Caki2 (cell line): ENCODE measurements at regions of chr2 and their contacts with region 1.

Region 1: GRCh38 chr2:42086500-42086953 is 38.7 kb downstream of the PKDCC start:
- DNase-seq: peak; percentile 55

Region 2: DNA sequence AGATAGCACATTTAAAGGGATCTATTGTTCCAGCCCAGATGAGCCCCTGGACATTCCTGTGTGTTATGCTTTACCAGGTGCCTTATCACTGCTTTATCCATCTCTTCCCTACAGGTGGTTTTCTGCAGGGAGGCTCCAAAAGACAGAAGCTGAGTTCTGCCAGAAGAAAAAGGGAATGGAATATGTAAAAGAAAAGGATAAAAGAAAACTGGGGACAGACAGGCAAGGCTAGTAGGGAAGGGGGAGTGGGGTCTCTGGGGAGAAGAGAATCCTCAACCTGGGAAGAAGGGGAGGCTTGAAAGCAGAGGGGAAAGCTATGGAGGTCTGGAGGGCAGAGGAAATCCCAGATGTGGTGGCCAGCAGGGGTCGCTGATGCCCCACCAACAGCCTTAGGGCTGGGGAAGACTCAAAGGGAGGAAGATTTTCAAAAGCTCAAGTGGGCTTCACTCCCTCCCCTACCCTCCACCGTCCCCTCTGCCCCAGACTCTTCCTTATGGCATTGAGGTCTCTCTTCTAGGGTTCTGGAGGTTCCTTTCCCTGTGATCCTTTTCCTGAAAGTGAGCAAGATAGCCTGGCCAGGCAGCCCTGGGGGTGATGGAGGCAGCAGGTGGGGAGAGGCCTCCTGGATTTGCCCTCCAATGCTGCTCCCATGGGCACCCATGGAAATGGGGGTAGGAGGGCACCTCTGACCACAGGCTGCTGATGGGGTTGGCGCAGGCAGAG is 216.8 kb before region 1 on chr2:
- in situ Hi-C with region 1: loop called (anchors 25 kb)
- DNase-seq: peak; percentile 59